ENCODE measurements at regions of chr9 and their contacts with region 1.

Region 1: DNA sequence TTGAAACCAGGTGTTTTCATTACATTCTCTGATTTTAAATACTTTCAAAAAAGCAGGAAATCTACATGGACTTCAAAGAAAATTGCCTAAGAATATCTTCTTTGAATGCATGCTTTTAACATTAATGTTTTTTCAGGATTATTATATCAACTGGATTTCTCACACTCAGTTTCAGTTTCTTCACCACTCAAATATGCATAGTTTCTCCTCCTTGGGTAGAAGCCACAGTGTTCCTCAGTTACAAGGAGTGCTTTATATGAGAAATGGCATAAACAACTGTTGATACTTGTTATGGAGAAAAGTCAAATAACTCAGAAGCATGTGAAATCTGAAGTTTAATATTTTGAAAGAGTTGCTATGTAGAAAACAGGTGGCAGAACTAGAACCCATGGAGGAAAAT is 196.9 kb downstream of the DMRTA1 start:
- DNase-seq: no peak
- H3K4me3 ChIP-seq: no peak overlapping the region
- H3K27ac ChIP-seq: no peak overlapping the region
- H3K4me1 ChIP-seq: no peaks in the 10 kb centered on the region
- H3K27me3 ChIP-seq: no peaks in the 10 kb centered on the region
- CTCF ChIP-seq: no peak
- POLR2A ChIP-seq: no peak

Region 2: DNA sequence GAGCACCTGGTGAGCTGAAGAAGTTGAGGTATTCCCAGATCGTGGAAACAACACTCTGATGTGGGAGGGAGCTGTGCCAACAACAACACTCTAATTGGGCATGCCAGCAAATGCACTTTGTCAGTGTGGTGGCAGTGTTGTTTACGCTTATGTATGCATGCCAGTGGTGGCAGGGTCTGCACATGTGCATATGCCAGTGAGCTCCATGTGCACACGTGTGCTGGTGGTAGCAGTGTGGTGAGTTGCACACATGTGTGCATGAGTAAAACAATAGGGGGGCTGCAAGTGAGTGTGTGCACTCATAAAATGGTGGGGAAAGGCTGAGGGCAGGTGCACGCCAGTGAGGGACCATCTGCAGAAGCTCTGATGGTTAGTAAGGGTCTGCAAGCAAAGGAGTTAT is 62.8 kb before region 1 on chr9:
- intact Hi-C with region 1: no loop called
- DNase-seq: no peak
- H3K4me3 ChIP-seq: no peak overlapping the region
- H3K27ac ChIP-seq: no peak overlapping the region
- H3K4me1 ChIP-seq: no peaks in the 10 kb centered on the region
- H3K27me3 ChIP-seq: no peaks in the 10 kb centered on the region
- CTCF ChIP-seq: no peak
- POLR2A ChIP-seq: no peak

Region 3: DNA sequence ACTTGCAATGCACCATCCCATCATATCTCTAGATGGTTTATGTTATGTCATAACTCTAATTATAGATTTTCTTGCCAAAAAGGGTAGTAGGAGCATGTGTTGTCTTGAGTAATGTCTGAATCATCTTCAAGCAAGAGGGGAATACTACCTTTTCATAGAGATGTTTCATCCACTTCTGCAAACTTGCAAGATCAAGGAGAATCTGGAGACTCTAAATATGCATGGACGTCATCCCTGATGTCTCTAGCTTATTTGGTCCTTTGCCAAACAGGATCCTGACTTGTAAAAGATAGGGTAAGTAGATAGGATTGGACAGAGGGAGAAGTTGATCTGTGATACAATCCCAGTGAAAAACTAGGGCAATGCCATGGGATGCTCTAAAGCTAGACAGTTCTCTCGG is 49.6 kb after region 1 on chr9:
- intact Hi-C with region 1: loop called (anchors 10 kb)
- DNase-seq: no peak
- H3K4me3 ChIP-seq: no peak overlapping the region
- H3K27ac ChIP-seq: no peak overlapping the region
- H3K4me1 ChIP-seq: no peaks in the 10 kb centered on the region
- H3K27me3 ChIP-seq: no peaks in the 10 kb centered on the region
- CTCF ChIP-seq: no peak
- POLR2A ChIP-seq: no peak

Measured in spleen (tissue), 13 donors.